ENCODE measurements at regions of chr9 and their contacts with region 1.

Region 1: DNA sequence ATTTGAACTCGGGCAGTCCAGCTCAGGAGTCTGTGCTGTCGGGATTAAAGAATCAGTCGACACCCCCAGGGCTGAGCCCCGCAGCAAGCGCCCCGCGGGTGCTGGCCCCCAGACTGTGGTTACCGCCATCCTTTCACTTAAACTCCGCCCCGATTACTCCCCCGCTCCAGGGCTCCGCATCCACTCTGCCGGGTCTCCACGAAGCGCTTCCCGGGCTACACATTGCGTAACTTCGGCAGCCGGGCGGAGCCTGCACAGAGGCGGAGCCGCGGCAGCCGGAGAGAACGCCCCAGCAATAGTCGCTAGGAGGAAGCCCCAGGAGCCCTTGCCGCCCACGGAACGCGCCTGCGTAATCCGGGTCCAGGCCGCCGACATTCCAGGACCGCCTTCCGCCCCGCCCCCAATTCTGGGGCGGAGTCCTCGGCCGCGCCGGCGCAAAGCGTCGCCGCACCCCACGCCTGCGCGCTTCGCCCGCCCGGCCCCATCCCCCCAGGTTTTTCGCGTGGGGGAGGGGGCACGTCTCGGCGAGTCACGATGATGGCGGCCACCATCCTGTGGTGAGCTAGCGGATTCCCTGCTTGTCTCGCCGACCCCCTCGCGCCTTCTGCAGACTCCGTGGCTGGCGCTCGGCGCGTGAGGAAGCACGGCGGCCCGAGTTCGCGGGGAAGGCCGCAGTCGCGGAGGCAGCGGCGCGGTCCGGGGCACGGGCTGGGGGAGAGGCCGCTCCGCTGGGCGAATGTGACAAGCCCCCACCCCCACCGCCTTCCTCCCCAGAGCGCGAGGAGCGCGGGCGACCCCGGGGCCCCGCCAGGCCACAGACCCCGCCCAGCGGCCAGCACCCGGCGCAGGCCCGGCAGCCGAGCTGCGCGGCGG is at the start of gene RAD23B:
- DNase-seq: peak; percentile 99
- ATAC-seq: peak; percentile 82
- H3K4me3 ChIP-seq: peak within 1 kb of the TSS; percentile 72 to 94 (median 88)
- H3K4me3 Mint-ChIP-seq: peak within 1 kb of the TSS; percentile 94
- H3K27ac ChIP-seq: peak within 1 kb of the TSS; percentile 72 to 93
- H3K27ac Mint-ChIP-seq: peak within 1 kb of the TSS; percentile 94
- H3K4me1 ChIP-seq: peaks cover 33 to 49% of the 10 kb centered on the region in 2 donors
- H3K4me1 Mint-ChIP-seq: peaks cover 62% of the 10 kb centered on the region
- H3K27me3 ChIP-seq: no peaks in the 10 kb centered on the region
- H3K27me3 Mint-ChIP-seq: no peaks in the 10 kb centered on the region
- CTCF ChIP-seq: no peak
- total RNA-seq, gene RAD23B: 76.6 and 78.2 TPM in 2 replicates

Region 2: GRCh38 chr9:107243751-107244150 is 39.2 kb before region 1 on chr9:
- CTCF ChIA-PET with region 1: interaction called, 81 read pairs
- POLR2A ChIA-PET with region 1: no interaction called
- intact Hi-C with region 1: loop called (anchors 1 kb)
- DNase-seq: no peak
- ATAC-seq: peak; percentile 21
- H3K4me3 ChIP-seq: no peak overlapping the region
- H3K4me3 Mint-ChIP-seq: no peak overlapping the region
- H3K27ac ChIP-seq: no peak overlapping the region
- H3K27ac Mint-ChIP-seq: no peak overlapping the region
- H3K4me1 ChIP-seq: no peaks in the 10 kb centered on the region
- H3K4me1 Mint-ChIP-seq: peaks cover 12% of the 10 kb centered on the region
- H3K27me3 ChIP-seq: no peaks in the 10 kb centered on the region
- H3K27me3 Mint-ChIP-seq: peaks cover 3% of the 10 kb centered on the region
- CTCF ChIP-seq: no peak

Region 3: DNA sequence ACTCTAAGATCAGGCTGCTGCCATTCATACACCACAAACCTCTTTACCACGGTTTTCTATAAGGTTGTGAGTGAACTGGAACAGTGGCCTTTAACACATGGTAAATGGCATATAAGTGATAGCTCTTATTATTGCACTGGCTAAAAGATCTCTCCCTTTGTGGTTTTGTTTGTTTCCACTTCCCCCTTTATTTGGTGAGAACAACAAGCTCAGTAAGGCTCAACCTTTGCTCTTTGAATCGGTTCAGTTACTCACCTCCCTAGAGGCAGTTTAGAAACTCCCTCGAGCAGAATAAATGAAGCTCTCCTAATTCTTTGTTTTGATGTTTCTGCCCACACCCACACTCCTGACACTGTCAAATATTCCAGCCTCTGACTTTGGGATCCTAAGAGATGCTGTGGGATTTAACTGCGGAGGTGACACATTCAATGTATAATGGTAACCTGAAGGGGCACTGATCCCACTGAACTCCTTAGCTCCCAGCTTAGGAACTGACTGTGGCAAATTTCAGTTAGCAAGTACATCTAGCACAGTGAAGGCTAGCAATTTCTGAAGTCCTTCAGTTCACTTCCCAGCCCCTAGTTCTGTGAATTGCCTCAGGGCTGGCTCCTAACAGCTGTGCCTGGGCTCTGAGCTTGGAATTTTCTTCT is 22.4 kb before region 1 on chr9:
- CTCF ChIA-PET with region 1: interaction called, 60 read pairs
- POLR2A ChIA-PET with region 1: interaction called, 50 read pairs
- intact Hi-C with region 1: loop called (anchors 1 kb)
- DNase-seq: peak; percentile 83
- ATAC-seq: peak; percentile 95
- H3K4me3 ChIP-seq: peak overlapping the region in 3 of 5 experiments; percentile 20 to 43 (median 23)
- H3K4me3 Mint-ChIP-seq: peak overlapping the region; percentile 81
- H3K27ac ChIP-seq: peak overlapping the region; percentile 57 to 58
- H3K27ac Mint-ChIP-seq: peak overlapping the region; percentile 81
- H3K4me1 ChIP-seq: peaks cover 22 to 26% of the 10 kb centered on the region in 2 donors
- H3K4me1 Mint-ChIP-seq: peaks cover 25% of the 10 kb centered on the region
- H3K27me3 ChIP-seq: no peaks in the 10 kb centered on the region
- H3K27me3 Mint-ChIP-seq: peaks cover 6% of the 10 kb centered on the region
- CTCF ChIP-seq: no peak

Region 4: GRCh38 chr9:107340920-107341632 is 58.1 kb after region 1 on chr9:
- CTCF ChIA-PET with region 1: interaction called, 22 read pairs
- POLR2A ChIA-PET with region 1: no interaction called
- intact Hi-C with region 1: loop called (anchors 1 kb)
- DNase-seq: peak; percentile 84
- ATAC-seq: peak; percentile 84
- H3K4me3 ChIP-seq: peak overlapping the region in 3 of 5 experiments; percentile 2 to 38 (median 17)
- H3K4me3 Mint-ChIP-seq: peak overlapping the region; percentile 58
- H3K27ac ChIP-seq: no peak overlapping the region
- H3K27ac Mint-ChIP-seq: no peak overlapping the region
- H3K4me1 ChIP-seq: peaks cover 3 to 8% of the 10 kb centered on the region in 2 donors
- H3K4me1 Mint-ChIP-seq: peaks cover 8% of the 10 kb centered on the region
- H3K27me3 ChIP-seq: peaks cover 0 to 2% (median 0%) of the 10 kb centered on the region in 4 experiments
- H3K27me3 Mint-ChIP-seq: no peaks in the 10 kb centered on the region
- CTCF ChIP-seq: peak; percentile 94

Region 5: GRCh38 chr9:107496976-107497375 is 214.0 kb after region 1 on chr9:
- CTCF ChIA-PET with region 1: no interaction called
- POLR2A ChIA-PET with region 1: no interaction called
- intact Hi-C with region 1: no loop called
- DNase-seq: no peak
- ATAC-seq: no peak
- H3K4me3 ChIP-seq: no peak overlapping the region
- H3K4me3 Mint-ChIP-seq: no peak overlapping the region
- H3K27ac ChIP-seq: no peak overlapping the region
- H3K27ac Mint-ChIP-seq: no peak overlapping the region
- H3K4me1 ChIP-seq: peaks cover 0 to 3% of the 10 kb centered on the region in 2 donors
- H3K4me1 Mint-ChIP-seq: no peaks in the 10 kb centered on the region
- H3K27me3 ChIP-seq: peaks cover 0 to 8% (median 7%) of the 10 kb centered on the region in 4 experiments
- H3K27me3 Mint-ChIP-seq: peaks cover 28% of the 10 kb centered on the region
- CTCF ChIP-seq: no peak

Region 6: DNA sequence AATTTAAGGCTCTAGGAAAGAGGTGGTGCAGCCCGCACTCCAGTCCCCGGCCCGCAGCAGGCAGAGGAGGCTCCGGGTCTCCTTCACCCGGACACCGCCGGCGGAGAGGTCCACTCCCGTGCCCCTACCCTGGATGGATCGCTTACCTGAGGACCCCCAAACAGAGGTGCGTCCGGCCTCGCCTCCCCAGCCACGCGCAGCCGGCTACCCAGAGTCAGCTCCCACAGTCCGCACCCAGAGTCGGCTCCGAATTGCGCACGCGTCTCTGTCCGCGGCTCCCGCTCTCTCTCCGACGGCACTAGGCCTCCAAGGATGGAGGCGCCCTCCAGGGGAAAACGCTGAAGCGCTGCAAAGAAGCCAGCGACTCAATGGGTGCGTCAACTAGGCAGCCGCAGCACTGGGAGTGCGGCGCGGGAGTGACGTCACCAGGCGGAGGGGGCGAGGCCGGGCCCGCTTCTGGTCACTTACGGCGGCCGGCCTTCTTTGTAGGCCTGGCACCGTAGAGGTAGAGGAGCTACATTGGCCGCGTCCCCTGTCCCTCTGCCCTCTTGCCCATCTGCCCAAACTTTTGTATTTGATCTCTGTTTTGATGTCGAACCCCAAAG is 1650.8 kb after region 1 on chr9 and contains the start of gene ELP1:
- CTCF ChIA-PET with region 1: no interaction called
- POLR2A ChIA-PET with region 1: no interaction called
- intact Hi-C with region 1: loop called (anchors 5 kb)
- DNase-seq: peak; percentile 94
- ATAC-seq: peak; percentile 81
- H3K4me3 ChIP-seq: peak within 1 kb of the TSS; percentile 83 to 97 (median 95)
- H3K4me3 Mint-ChIP-seq: peak within 1 kb of the TSS; percentile 97
- H3K27ac ChIP-seq: peak within 1 kb of the TSS; percentile 74 to 81
- H3K27ac Mint-ChIP-seq: peak within 1 kb of the TSS; percentile 95
- H3K4me1 ChIP-seq: peaks cover 16 to 18% of the 10 kb centered on the region in 2 donors
- H3K4me1 Mint-ChIP-seq: peaks cover 17% of the 10 kb centered on the region
- H3K27me3 ChIP-seq: no peaks in the 10 kb centered on the region
- H3K27me3 Mint-ChIP-seq: no peaks in the 10 kb centered on the region
- CTCF ChIP-seq: peak; percentile 26
- total RNA-seq, gene ELP1: 25.8 and 29.4 TPM in 2 replicates

Region 7: GRCh38 chr9:109119439-109120203 is 1836.6 kb after region 1 on chr9 and contains the start of gene TMEM245:
- CTCF ChIA-PET with region 1: no interaction called
- POLR2A ChIA-PET with region 1: no interaction called
- intact Hi-C with region 1: loop called (anchors 10 kb)
- DNase-seq: peak; percentile 97
- ATAC-seq: peak; percentile 96
- H3K4me3 ChIP-seq: peak within 1 kb of the TSS; percentile 63 to 89 (median 74)
- H3K4me3 Mint-ChIP-seq: peak within 1 kb of the TSS; percentile 91
- H3K27ac ChIP-seq: peak within 1 kb of the TSS; percentile 24 to 81
- H3K27ac Mint-ChIP-seq: peak within 1 kb of the TSS; percentile 86
- H3K4me1 ChIP-seq: peaks cover 18 to 32% of the 10 kb centered on the region in 2 donors
- H3K4me1 Mint-ChIP-seq: peaks cover 30% of the 10 kb centered on the region
- H3K27me3 ChIP-seq: no peaks in the 10 kb centered on the region
- H3K27me3 Mint-ChIP-seq: no peaks in the 10 kb centered on the region
- CTCF ChIP-seq: no peak
- total RNA-seq, gene TMEM245: 33.4 and 34.3 TPM in 2 replicates

Measured in B cell (primary cell).